PC-9 (cell line): ENCODE measurements at regions of chr9 and their contacts with region 1.

Region 1: GRCh38 chr9:96186591-96187011 is 115.4 kb downstream of the HSD17B3 start:
- DNase-seq: peak in 1 of 2 experiments; percentile 8
- H3K4me3 ChIP-seq: no peak overlapping the region
- H3K27ac ChIP-seq: no peak overlapping the region
- H3K4me1 ChIP-seq: no peaks in the 10 kb centered on the region
- H3K27me3 ChIP-seq: peaks cover 31% of the 10 kb centered on the region
- CTCF ChIP-seq: no peak

Region 2: DNA sequence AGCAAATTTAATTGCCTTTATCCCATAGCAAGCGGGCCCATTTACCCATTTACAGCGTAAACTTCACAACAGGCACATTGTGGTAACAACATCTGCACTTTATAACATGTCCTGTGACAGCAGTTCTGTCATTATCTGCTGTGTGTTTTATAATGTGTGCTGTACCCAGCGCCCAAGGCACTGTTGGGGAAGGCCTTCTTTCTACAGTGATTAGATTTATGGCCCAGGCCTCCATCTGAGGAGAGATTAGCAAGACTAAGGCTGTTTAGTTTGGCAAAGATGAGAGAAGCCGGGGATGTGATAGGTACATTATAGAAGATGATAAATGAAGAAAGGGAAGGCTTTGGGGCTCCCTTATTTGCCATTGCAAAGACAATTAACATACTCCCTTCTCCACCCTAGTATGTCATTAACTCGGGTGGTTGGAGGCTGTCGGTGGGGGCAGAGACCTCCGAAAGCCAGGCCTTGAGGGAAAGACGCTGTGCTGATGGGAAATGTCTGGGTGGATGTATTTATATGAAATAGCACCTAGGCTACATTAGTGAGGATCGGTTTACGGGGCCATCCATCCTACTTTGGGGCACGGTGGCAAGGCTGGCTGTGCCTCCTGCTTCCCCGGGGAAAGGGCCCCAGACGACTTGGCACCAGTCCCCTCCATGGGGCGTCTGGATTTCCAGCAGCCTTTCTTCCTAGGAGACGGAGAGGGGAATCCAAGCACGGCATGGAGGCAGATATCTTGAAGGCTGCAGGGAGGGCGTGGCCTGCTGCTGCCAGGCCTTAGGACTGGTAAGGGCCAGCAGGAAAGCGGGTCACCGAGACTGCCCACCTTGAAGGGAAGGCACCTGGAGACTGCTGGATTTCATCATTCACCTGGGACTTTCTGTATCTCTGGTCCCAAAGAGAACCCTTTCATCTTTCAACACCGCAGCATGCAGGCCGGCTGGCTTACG is 605.5 kb before region 1 on chr9:
- CTCF ChIA-PET with region 1: no interaction called
- POLR2A ChIA-PET with region 1: no interaction called
- intact Hi-C with region 1: no loop called
- DNase-seq: no peak
- H3K4me3 ChIP-seq: no peak overlapping the region
- H3K27ac ChIP-seq: no peak overlapping the region
- H3K4me1 ChIP-seq: no peaks in the 10 kb centered on the region
- H3K27me3 ChIP-seq: peaks cover 87% of the 10 kb centered on the region
- CTCF ChIP-seq: no peak

Region 3: GRCh38 chr9:96150324-96151227 is 36.0 kb before region 1 on chr9:
- CTCF ChIA-PET with region 1: no interaction called
- POLR2A ChIA-PET with region 1: no interaction called
- intact Hi-C with region 1: loop called (anchors 2 kb)
- DNase-seq: no peak
- H3K4me3 ChIP-seq: no peak overlapping the region
- H3K27ac ChIP-seq: no peak overlapping the region
- H3K4me1 ChIP-seq: no peaks in the 10 kb centered on the region
- H3K27me3 ChIP-seq: peaks cover 60% of the 10 kb centered on the region
- CTCF ChIP-seq: no peak